T-cell (primary cell): ENCODE measurements at regions of chr7 and their contacts with region 1.

Region 1: GRCh38 chr7:28102778-28103177 is 77.8 kb downstream of the JAZF1 start:
- DNase-seq: no peak
- ATAC-seq: no peak
- H3K4me3 ChIP-seq: no peak overlapping the region
- H3K4me3 Mint-ChIP-seq: no peak overlapping the region
- H3K27ac ChIP-seq: no peak overlapping the region
- H3K27ac Mint-ChIP-seq: no peak overlapping the region
- H3K4me1 ChIP-seq: no peaks in the 10 kb centered on the region
- H3K4me1 Mint-ChIP-seq: peaks cover 0 to 27% (median 0%) of the 10 kb centered on the region in 3 donors
- H3K27me3 ChIP-seq: no peaks in the 10 kb centered on the region
- H3K27me3 Mint-ChIP-seq: no peaks in the 10 kb centered on the region

Region 2: GRCh38 chr7:26413012-26413691 is 1689.6 kb before region 1 on chr7:
- CTCF ChIA-PET with region 1: no interaction called
- POLR2A ChIA-PET with region 1: no interaction called
- DNase-seq: no peak
- ATAC-seq: no peak
- H3K4me3 ChIP-seq: no peak overlapping the region
- H3K4me3 Mint-ChIP-seq: no peak overlapping the region
- H3K27ac ChIP-seq: no peak overlapping the region
- H3K27ac Mint-ChIP-seq: no peak overlapping the region
- H3K4me1 ChIP-seq: no peaks in the 10 kb centered on the region
- H3K4me1 Mint-ChIP-seq: no peaks in the 10 kb centered on the region
- H3K27me3 ChIP-seq: peaks cover 0 to 3% of the 10 kb centered on the region in 2 experiments
- H3K27me3 Mint-ChIP-seq: peaks cover 24 to 26% of the 10 kb centered on the region in 2 donors

Region 3: GRCh38 chr7:28125431-28126409 is 22.9 kb after region 1 on chr7:
- CTCF ChIA-PET with region 1: no interaction called
- POLR2A ChIA-PET with region 1: no interaction called
- DNase-seq: no peak
- ATAC-seq: no peak
- H3K4me3 ChIP-seq: no peak overlapping the region
- H3K4me3 Mint-ChIP-seq: no peak overlapping the region
- H3K27ac ChIP-seq: no peak overlapping the region
- H3K27ac Mint-ChIP-seq: no peak overlapping the region
- H3K4me1 ChIP-seq: peaks cover 0 to 14% of the 10 kb centered on the region in 2 experiments
- H3K4me1 Mint-ChIP-seq: peaks cover 27 to 84% (median 35%) of the 10 kb centered on the region in 3 donors
- H3K27me3 ChIP-seq: no peaks in the 10 kb centered on the region
- H3K27me3 Mint-ChIP-seq: no peaks in the 10 kb centered on the region

Region 4: DNA sequence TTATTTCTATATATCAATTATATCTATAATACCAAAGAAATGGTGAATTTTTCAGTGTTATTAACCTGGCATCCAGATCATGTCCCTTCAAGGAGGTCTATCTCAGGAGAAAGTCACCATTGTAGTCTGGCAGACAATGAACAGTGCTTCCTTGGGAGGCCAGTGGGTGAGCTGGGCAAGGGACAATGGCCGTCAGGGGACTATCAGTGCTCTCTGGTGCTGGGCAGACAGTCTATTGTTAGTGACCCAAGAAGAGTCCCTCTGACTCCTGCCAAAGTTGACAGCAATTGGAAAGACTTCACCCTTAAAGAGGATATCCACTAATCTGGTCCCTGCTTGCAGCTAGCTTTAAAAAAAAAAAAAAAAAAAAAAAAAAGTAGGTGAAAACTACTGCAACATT is 70.8 kb after region 1 on chr7:
- CTCF ChIA-PET with region 1: interaction called in 1 of 2 experiments, 10 read pairs
- POLR2A ChIA-PET with region 1: no interaction called
- DNase-seq: no peak
- ATAC-seq: no peak
- H3K4me3 ChIP-seq: no peak overlapping the region
- H3K4me3 Mint-ChIP-seq: no peak overlapping the region
- H3K27ac ChIP-seq: no peak overlapping the region
- H3K27ac Mint-ChIP-seq: no peak overlapping the region
- H3K4me1 ChIP-seq: peaks cover 2 to 5% of the 10 kb centered on the region in 2 experiments
- H3K4me1 Mint-ChIP-seq: peaks cover 8 to 54% (median 8%) of the 10 kb centered on the region in 3 donors
- H3K27me3 ChIP-seq: no peaks in the 10 kb centered on the region
- H3K27me3 Mint-ChIP-seq: no peaks in the 10 kb centered on the region